Activated CD8-positive, alpha-beta memory T cell treated with anti-CD3 and anti-CD28 coated beads, Interleukin-2, amount 10 ng/mL, durations not matched to agents 7 days and 5 days (primary cell): ENCODE measurements at regions of chr5 and their contacts with region 1.

Region 1: DNA sequence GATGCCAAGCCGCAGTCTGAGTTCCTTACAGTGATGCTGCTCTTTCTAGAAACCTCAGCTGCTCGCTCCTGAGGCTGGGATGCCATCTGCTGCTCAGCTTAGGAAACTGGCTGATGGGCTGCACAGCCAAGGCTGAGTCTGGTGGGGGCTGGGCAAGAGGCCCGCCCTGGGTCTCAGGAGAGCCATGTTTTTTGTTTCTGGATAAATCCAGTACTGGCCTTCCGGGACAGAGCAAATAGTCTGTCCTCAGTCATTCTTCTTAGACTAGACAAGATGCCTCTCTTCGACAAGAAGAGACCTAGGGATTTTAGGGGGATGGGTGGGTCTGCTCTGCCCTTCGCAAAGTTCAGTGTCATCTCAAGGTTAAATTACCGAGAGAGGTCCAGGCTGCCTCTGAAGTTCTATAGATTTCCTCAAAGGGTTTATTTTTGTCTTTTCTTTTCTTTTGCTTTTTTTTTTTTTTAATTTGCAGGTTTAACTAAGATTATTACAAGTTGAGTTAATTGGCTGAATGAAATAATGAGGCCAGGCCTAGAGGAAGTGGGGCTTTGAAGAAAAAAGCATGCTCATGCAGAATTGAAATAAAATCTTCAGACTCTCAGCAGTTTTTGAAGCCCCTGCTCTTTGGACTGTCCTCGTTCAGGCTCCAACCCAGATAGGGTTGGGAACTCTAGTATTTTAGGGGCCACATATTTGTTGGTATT is 30.6 kb upstream of the MATR3 start:
- DNase-seq: peak; percentile 83
- ATAC-seq: peak; percentile 98
- H3K4me3 Mint-ChIP-seq: no peak overlapping the region
- H3K27ac Mint-ChIP-seq: no peak overlapping the region
- H3K4me1 Mint-ChIP-seq: peaks cover 12% of the 10 kb centered on the region
- H3K27me3 Mint-ChIP-seq: peaks cover 21% of the 10 kb centered on the region

Region 2: GRCh38 chr5:138824924-138825863 is 437.7 kb before region 1 on chr5:
- CTCF ChIA-PET with region 1: interaction called, 10 read pairs
- DNase-seq: no peak
- ATAC-seq: peak; percentile 30
- H3K4me3 Mint-ChIP-seq: no peak overlapping the region
- H3K27ac Mint-ChIP-seq: no peak overlapping the region
- H3K4me1 Mint-ChIP-seq: peaks cover 4% of the 10 kb centered on the region
- H3K27me3 Mint-ChIP-seq: no peaks in the 10 kb centered on the region

Region 3: DNA sequence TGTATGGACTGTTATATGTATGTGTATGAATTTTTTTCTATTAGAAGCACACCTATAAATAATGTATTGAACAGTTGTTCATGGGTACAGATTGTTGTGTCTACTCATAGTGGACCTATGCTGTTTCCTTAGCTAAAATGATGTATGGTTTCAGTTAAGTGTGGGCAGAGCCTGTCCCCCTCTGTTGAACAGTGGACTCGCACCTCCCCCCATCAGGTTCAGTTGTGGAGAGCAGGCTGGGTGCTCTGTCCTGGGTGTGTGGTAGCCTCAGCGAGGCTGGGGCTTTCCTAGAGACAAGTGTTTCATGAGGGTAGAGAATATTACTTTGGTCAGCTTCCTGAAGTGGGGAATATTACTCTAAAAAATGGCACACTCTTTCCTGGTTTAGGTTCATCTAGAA is 340.4 kb before region 1 on chr5:
- CTCF ChIA-PET with region 1: no interaction called
- DNase-seq: no peak
- ATAC-seq: no peak
- H3K4me3 Mint-ChIP-seq: no peak overlapping the region
- H3K27ac Mint-ChIP-seq: no peak overlapping the region
- H3K4me1 Mint-ChIP-seq: peaks cover 9% of the 10 kb centered on the region
- H3K27me3 Mint-ChIP-seq: no peaks in the 10 kb centered on the region

Region 4: GRCh38 chr5:139120521-139120920 is 142.4 kb before region 1 on chr5:
- CTCF ChIA-PET with region 1: no interaction called
- DNase-seq: no peak
- ATAC-seq: no peak
- H3K4me3 Mint-ChIP-seq: no peak overlapping the region
- H3K27ac Mint-ChIP-seq: no peak overlapping the region
- H3K4me1 Mint-ChIP-seq: no peaks in the 10 kb centered on the region
- H3K27me3 Mint-ChIP-seq: no peaks in the 10 kb centered on the region

Region 5: GRCh38 chr5:139251281-139251687 is 11.6 kb before region 1 on chr5:
- CTCF ChIA-PET with region 1: interaction called, 13 read pairs
- DNase-seq: peak; percentile 63
- ATAC-seq: peak; percentile 43
- H3K4me3 Mint-ChIP-seq: no peak overlapping the region
- H3K27ac Mint-ChIP-seq: no peak overlapping the region
- H3K4me1 Mint-ChIP-seq: peaks cover 22% of the 10 kb centered on the region
- H3K27me3 Mint-ChIP-seq: no peaks in the 10 kb centered on the region

Region 6: GRCh38 chr5:139282197-139282557 is 19.3 kb after region 1 on chr5:
- CTCF ChIA-PET with region 1: no interaction called
- DNase-seq: no peak
- ATAC-seq: no peak
- H3K4me3 Mint-ChIP-seq: no peak overlapping the region
- H3K27ac Mint-ChIP-seq: peak overlapping the region; percentile 49
- H3K4me1 Mint-ChIP-seq: peaks cover 41% of the 10 kb centered on the region
- H3K27me3 Mint-ChIP-seq: no peaks in the 10 kb centered on the region